ENCODE measurements at regions of chr12 and their contacts with region 1.

Region 1: GRCh38 chr12:79690638-79691493 is at the start of gene PAWR:
- DNase-seq: no peak
- H3K4me3 ChIP-seq: peak within 1 kb of the TSS; percentile 92 to 99
- H3K27ac ChIP-seq: peak within 1 kb of the TSS; percentile 95
- H3K4me1 ChIP-seq: peaks cover 11% of the 10 kb centered on the region
- H3K27me3 ChIP-seq: no peaks in the 10 kb centered on the region
- CTCF ChIP-seq: no peak
- POLR2A ChIP-seq: no peak
- total RNA-seq, gene PAWR: 103 TPM

Region 2: DNA sequence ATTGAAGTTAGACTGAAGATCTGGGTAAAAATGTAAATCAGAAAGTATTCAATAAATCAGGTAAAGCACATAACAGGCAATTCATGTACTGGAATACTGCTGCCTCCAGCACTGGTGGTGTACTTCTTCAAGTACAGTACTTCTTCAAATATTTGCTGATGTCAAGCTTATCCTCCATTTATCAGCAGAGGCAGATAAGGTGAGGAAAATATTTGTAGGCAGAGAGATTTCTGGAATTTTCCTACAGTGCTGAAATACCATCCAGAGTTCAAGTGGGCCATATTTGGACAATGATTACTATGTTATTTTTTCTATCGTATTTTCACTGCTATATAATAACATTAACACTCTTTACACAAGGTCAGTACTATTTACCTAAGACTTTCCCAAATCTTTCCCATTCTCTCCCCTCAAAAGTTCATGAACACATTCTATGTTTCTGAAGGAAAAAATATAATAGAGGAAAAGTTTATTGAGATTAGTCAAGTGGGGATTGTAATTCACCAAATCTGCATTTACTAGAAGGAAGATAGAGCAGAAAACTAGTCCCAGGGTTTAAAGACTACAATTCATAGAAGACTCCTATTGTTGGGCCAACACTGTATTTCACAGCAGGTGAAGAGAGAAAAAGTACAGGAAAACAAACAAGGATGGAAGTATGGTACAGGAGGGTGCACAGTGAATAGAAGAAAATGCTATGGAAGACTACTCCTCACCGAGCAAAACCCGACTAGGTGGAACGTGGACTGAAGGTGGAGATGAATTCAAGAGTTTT is 141.2 kb before region 1 on chr12:
- intact Hi-C with region 1: loop called (anchors 5 kb)
- DNase-seq: no peak
- H3K4me3 ChIP-seq: no peak overlapping the region
- H3K27ac ChIP-seq: no peak overlapping the region
- H3K4me1 ChIP-seq: peaks cover 20% of the 10 kb centered on the region
- H3K27me3 ChIP-seq: no peaks in the 10 kb centered on the region
- CTCF ChIP-seq: no peak
- POLR2A ChIP-seq: no peak

Region 3: GRCh38 chr12:79706215-79706614 is 15.3 kb after region 1 on chr12:
- intact Hi-C with region 1: no loop called
- DNase-seq: no peak
- H3K4me3 ChIP-seq: no peak overlapping the region
- H3K27ac ChIP-seq: no peak overlapping the region
- H3K4me1 ChIP-seq: no peaks in the 10 kb centered on the region
- H3K27me3 ChIP-seq: no peaks in the 10 kb centered on the region
- CTCF ChIP-seq: no peak
- POLR2A ChIP-seq: no peak

Measured in vagina (tissue), 2 donors.